GM10248 (cell line): ENCODE measurements at regions of chr17 and their contacts with region 1.

Region 1: DNA sequence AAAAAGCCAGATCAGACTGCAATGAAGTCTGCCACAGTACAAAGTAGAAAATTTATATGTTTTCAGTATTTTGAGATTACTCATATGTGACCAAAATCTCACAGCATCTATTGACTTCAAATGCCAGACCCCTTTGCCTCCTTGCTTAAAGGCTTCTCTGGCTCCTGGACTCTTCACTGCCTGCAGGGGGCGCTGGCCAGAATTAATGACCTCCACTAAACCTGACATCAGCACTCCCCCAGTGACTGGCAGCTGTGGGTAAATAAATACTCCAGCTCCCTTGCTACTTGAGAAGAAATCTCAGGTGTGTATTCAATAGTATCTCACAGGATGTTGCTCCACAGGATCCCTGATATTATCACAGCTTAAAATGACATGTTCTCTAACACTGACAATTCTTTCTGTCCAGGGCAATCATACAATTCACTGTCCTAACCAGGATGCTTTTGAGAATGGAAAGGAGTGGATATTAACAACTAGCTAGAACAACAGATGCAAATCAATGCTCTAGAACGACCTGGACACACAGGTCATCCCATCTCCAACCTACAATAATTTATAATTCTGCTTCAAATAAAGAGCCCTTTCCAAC is 4.0 kb downstream of the BECN1 start:
- DNase-seq: peak; percentile 62
- CTCF ChIP-seq: peak; percentile 72

Region 2: DNA sequence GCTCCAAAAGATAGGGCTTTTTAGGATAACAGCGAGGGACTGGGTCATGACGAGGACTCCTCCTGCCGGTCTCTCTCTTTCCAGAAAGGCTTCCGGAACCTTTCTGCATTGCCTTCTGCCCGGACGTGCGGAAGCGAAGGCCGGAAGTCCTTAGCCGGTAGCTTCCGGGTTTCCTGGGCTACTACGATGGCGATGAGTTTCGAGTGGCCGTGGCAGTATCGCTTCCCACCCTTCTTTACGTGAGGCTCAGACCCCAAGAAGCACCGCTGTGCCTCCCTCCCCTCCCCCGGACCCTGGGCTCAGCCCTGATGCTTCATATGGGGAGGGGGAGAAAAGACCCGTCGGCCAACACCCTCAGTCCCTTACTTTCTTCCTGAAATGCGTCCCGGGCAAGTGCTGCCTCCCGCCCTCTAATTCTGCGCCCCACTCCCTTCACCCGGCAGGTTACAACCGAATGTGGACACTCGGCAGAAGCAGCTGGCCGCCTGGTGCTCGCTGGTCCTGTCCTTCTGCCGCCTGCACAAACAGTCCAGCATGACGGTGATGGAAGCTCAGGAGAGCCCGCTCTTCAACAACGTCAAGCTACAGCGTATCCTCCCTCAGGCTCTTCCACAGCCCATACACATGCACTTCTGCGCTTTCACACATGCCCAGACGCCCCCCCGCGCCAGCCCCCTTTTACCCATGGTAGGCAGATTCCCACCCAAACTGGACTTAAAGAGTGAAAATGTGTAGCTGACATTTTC is 46.6 kb before region 1 on chr17 and contains the start of gene VPS25:
- CTCF ChIA-PET with region 1: interaction called, 10 read pairs
- POLR2A ChIA-PET with region 1: no interaction called
- DNase-seq: peak; percentile 88
- CTCF ChIP-seq: no peak

Region 3: GRCh38 chr17:42809250-42809649 is 10.8 kb before region 1 on chr17:
- CTCF ChIA-PET with region 1: interaction called, 37 read pairs
- POLR2A ChIA-PET with region 1: no interaction called
- DNase-seq: no peak
- CTCF ChIP-seq: no peak

Region 4: GRCh38 chr17:42832974-42833766 is 13.1 kb after region 1 on chr17 and contains the start of gene PSME3:
- CTCF ChIA-PET with region 1: interaction called, 80 read pairs
- POLR2A ChIA-PET with region 1: interaction called, 10 read pairs
- DNase-seq: peak; percentile 94
- CTCF ChIP-seq: no peak

Region 5: DNA sequence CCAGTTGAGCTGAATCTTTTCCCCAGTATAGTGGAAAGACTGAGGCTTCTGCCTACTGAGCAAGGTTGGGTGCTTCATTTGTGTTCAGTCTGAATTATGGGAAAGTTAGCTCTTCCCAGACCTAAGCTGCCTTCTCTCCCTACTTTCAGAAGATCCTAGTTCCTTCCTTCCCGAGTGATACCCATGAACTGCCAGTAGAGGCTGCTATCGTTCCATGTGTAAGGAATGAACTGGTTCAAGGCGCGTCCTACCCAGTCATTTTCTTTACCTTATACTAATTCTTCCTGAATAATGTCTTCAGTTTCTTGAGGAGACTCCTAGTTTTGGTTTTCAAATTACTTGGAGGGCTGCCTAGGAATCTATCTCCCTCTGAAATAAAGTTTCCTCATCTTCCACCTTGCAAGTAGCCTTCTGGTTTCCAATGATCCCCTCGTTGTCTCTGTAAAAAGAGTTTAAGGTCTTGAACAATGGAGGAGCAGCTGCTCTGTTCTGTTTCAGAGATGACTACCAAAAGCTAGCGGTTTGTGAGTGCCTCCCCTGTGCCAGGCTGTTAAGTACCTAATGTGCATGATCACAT is 23.4 kb after region 1 on chr17:
- CTCF ChIA-PET with region 1: interaction called, 80 read pairs
- POLR2A ChIA-PET with region 1: no interaction called
- DNase-seq: no peak
- CTCF ChIP-seq: peak; percentile 64

Region 6: DNA sequence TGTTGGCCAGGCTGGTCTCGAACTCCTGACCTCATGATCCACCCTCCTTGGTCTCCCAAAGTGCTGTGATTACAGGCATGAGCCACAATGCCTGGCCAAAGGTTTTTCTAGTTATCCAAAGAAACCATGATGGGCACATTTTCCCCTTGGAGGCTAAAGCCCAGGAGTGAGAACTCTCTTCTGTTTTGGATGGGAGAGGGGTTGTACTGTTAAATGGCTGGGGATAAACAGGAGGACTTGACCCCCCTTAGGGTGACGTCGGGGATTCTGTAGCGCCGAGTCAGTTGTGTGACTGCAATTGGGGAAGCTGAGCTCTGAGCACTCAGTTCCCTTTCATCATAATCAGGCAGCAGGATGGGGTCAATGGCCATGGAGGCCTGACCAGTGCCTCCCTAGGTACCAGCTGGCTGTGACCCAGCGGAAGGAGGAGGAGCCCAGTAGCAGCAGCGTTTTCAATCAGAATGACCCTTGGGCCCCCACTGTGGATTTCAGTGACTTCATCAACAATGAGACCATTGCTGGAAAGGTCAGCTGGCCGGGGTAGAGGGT is 35.1 kb after region 1 on chr17:
- CTCF ChIA-PET with region 1: no interaction called
- POLR2A ChIA-PET with region 1: no interaction called
- DNase-seq: no peak
- CTCF ChIP-seq: no peak